Activated CD4-positive, alpha-beta T cell treated with anti-CD3 and anti-CD28 coated beads for 36 hours (primary cell): ENCODE measurements at regions of chr15 and their contacts with region 1.

Region 1: DNA sequence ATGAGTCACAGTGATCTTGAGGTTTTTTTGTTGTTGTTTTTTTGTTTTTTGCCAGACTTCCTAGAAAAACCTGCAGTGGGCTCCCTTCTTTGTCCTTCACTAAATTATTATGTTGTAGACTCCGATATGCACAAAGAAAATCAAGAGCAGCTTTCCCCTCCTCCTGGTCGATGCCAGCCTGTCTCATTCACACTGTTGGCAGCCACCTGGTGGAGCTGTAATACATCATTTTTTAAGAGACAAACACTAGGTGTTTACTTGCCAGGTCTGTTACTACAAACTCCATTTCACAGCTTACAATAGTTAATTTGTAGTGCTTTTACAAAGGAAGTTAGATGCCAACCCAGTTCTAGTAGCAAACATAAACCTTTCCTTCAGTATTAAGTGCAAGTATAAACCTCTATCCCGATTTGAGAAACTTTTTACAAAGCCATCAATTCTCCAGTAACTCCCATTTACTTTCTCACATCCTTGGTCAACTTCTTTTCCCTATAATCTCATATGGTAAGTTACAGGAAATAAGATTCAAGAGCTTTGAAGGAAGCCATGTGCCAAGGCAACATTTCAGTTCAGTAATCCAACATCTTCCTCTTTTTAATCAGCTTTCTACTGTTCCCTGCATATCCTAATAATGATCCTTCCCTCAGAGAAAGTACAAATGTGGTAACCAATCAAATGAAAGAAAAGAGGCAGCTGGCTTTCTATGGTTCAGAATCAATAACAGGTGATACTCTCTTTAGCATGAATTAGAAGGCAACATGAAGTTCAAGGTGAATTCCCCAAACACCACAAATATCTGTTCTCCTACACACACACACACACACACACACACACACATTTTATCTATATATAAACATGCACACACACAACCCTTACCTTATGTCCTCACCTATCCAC is 14.0 kb downstream of the AAGAB start:
- DNase-seq: peak; percentile 48
- ATAC-seq: peak; percentile 45
- H3K4me3 Mint-ChIP-seq: peak overlapping the region; percentile 17
- H3K27ac Mint-ChIP-seq: peak overlapping the region; percentile 89
- H3K4me1 Mint-ChIP-seq: peaks cover 49% of the 10 kb centered on the region
- H3K27me3 Mint-ChIP-seq: no peaks in the 10 kb centered on the region

Region 2: DNA sequence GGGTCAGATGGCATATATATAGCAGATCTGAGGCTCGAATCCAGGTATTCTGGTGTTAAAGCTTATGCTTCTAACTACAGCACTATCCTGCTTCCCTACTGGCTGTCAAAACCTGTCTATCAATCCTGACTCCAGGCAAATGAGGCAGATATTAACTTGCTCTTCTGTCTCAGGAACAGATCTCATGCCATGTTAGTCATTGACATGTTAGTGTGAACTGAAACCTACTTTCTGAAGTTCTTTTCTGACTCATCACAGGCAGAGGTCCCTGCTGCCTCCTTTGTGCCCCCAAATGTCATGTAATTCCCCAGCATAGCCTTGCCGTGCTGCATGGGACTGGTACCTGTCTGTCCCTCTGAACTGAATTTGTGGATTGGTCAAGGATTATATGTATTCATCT is 300.1 kb before region 1 on chr15:
- CTCF ChIA-PET with region 1: no interaction called
- POLR2A ChIA-PET with region 1: no interaction called
- intact Hi-C with region 1: loop called in 1 of 2 experiments (anchors 2 kb)
- DNase-seq: peak; percentile 42
- ATAC-seq: peak; percentile 94
- H3K4me3 Mint-ChIP-seq: no peak overlapping the region
- H3K27ac Mint-ChIP-seq: no peak overlapping the region
- H3K4me1 Mint-ChIP-seq: peaks cover 14% of the 10 kb centered on the region
- H3K27me3 Mint-ChIP-seq: peaks cover 2% of the 10 kb centered on the region

Region 3: DNA sequence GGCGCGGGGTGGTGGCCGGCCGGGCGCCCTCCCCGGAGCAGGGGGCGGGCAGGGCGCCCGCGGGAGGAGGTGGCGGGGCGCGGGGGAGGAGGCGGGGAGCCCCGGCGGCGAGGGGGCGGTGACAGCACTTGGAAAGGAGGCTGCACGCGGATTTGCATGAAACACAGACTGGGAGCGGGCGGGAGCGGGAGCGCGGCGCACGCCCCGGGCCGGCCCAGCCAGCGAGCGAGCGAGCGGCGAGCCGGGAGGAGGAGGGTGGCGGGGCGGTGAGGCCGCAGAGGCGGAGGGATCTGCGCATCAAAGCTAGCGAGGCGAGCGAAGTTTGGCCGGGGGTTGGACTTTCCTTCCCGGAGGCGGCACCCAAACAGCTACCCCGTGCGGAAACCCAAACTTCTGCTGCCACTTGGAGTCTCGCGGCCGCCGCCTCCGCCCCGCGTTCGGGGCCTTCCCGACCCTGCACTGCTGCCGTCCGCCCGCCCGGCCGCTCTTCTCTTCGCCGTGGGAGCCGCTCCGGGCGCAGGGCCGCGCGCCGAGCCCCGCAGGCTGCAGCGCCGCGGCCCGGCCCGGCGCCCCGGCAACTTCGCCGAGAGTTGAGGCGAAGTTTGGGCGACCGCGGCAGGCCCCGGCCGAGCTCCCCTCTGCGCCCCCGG is 174.9 kb before region 1 on chr15 and contains the start of gene SMAD3:
- CTCF ChIA-PET with region 1: no interaction called
- POLR2A ChIA-PET with region 1: no interaction called
- intact Hi-C with region 1: loop called in 1 of 2 experiments (anchors 2 kb)
- DNase-seq: peak; percentile 85
- ATAC-seq: peak; percentile 39
- H3K4me3 Mint-ChIP-seq: peak within 1 kb of the TSS; percentile 91
- H3K27ac Mint-ChIP-seq: peak within 1 kb of the TSS; percentile 92
- H3K4me1 Mint-ChIP-seq: peaks cover 47% of the 10 kb centered on the region
- H3K27me3 Mint-ChIP-seq: peaks cover 17% of the 10 kb centered on the region
- total RNA-seq, gene SMAD3: 33.7 to 40.8 TPM

Region 4: DNA sequence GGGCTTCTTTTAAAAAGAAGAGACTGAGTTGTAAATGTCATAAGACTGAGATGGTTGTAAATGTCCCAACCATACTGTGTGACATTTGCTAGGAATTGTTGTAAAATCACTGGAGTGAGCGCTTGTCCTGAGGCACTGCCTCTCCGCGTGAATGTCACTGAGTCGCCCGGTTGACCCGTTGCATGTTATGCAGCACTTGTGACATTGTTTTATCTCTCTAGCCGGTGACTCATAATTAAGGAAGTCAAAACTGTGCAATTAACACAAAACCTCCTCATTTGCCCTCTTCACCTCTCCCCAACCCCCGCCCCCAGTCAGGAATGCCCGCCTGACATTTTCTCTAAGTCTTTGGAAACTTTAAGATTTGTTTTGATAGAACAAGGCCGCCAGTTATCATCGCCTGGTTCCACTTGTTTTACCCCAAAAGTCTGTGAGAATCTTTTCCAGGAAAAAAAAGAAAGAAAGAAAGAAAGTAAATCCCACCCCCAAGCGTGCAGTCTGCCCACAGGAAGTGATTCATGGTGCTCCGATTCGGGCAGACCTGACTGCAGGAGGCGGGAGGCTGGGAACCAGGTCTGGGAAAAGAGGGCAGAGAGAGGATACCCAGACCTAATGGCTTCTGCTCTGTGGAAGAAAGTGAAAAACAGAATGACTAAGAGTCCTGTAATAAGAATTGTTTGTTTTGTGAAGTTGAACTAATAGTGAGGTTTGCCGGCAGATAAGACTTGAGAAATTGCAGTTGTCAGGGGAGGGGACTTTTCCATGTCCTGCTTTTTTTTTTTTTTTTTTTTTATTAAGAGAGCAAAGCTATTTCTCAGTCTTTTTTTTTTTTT is 90.2 kb before region 1 on chr15:
- CTCF ChIA-PET with region 1: no interaction called
- POLR2A ChIA-PET with region 1: interaction called, 3 read pairs
- intact Hi-C with region 1: loop called (anchors 1 to 5 kb)
- DNase-seq: peak; percentile 74
- ATAC-seq: peak; percentile 67
- H3K4me3 Mint-ChIP-seq: peak overlapping the region; percentile 60
- H3K27ac Mint-ChIP-seq: peak overlapping the region; percentile 82
- H3K4me1 Mint-ChIP-seq: peaks cover 67% of the 10 kb centered on the region
- H3K27me3 Mint-ChIP-seq: no peaks in the 10 kb centered on the region

Region 5: GRCh38 chr15:67165254-67166253 is 74.9 kb before region 1 on chr15:
- CTCF ChIA-PET with region 1: no interaction called
- POLR2A ChIA-PET with region 1: no interaction called
- intact Hi-C with region 1: no loop called
- DNase-seq: no peak
- ATAC-seq: no peak
- H3K4me3 Mint-ChIP-seq: no peak overlapping the region
- H3K27ac Mint-ChIP-seq: peak overlapping the region; percentile 15
- H3K4me1 Mint-ChIP-seq: peaks cover 7% of the 10 kb centered on the region
- H3K27me3 Mint-ChIP-seq: no peaks in the 10 kb centered on the region

Region 6: GRCh38 chr15:67303490-67304363 is 63.2 kb after region 1 on chr15:
- CTCF ChIA-PET with region 1: interaction called, 12 read pairs
- POLR2A ChIA-PET with region 1: no interaction called
- intact Hi-C with region 1: loop called (anchors 1 kb)
- DNase-seq: peak; percentile 22
- ATAC-seq: no peak
- H3K4me3 Mint-ChIP-seq: no peak overlapping the region
- H3K27ac Mint-ChIP-seq: no peak overlapping the region
- H3K4me1 Mint-ChIP-seq: peaks cover 16% of the 10 kb centered on the region
- H3K27me3 Mint-ChIP-seq: peaks cover 3% of the 10 kb centered on the region

Region 7: GRCh38 chr15:67548862-67549651 is 308.6 kb after region 1 on chr15:
- CTCF ChIA-PET with region 1: no interaction called
- POLR2A ChIA-PET with region 1: interaction called, 10 read pairs
- intact Hi-C with region 1: no loop called
- DNase-seq: no peak
- ATAC-seq: no peak
- H3K4me3 Mint-ChIP-seq: no peak overlapping the region
- H3K27ac Mint-ChIP-seq: no peak overlapping the region
- H3K4me1 Mint-ChIP-seq: peaks cover 28% of the 10 kb centered on the region
- H3K27me3 Mint-ChIP-seq: no peaks in the 10 kb centered on the region